Adrenal gland (tissue), 19 donors: ENCODE measurements at regions of chr2 and their contacts with region 1.

Region 1: GRCh38 chr2:127591221-127591923 is 54.6 kb upstream of the GPR17 start:
- DNase-seq: peak; percentile 30 to 79 (median 65)
- H3K4me3 ChIP-seq: no peak overlapping the region
- H3K27ac ChIP-seq: no peak overlapping the region
- H3K4me1 ChIP-seq: no peaks in the 10 kb centered on the region
- H3K27me3 ChIP-seq: no peaks in the 10 kb centered on the region
- CTCF ChIP-seq: peak; percentile 77 to 90 (median 82)
- POLR2A ChIP-seq: no peak

Region 2: DNA sequence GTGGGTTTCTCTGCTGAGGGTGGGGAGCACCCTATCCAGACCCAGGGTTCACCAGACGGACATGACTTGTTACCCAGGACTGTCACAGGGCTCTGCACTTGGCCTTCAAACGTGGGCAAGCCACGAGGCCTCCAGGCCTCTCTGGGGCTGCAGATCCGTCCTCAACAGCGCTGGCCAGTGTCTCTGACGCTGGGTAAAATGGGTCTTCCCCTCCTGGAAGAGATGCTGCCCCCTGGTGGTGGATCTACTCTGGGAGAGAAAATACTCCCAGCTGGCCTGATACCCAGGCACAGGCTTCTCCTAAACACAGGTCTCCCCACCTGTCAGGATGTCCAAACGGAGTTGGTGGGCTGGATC is 58.3 kb after region 1 on chr2:
- intact Hi-C with region 1: loop called in 1 of 2 experiments (anchors 5 kb)
- DNase-seq: peak; percentile 85 to 94 (median 89)
- H3K4me3 ChIP-seq: no peak overlapping the region
- H3K27ac ChIP-seq: peak overlapping the region in 1 of 5 donors; percentile 31
- H3K4me1 ChIP-seq: peaks cover 0 to 9% of the 10 kb centered on the region in 2 donors
- H3K27me3 ChIP-seq: no peaks in the 10 kb centered on the region
- CTCF ChIP-seq: peak; percentile 65 to 89 (median 80)
- POLR2A ChIP-seq: no peak